ENCODE measurements at regions of chr6 and their contacts with region 1.

Region 1: GRCh38 chr6:72084992-72085569 is 198.7 kb downstream of the RIMS1 start:
- DNase-seq: no peak
- H3K4me3 Mint-ChIP-seq: no peak overlapping the region
- H3K27ac Mint-ChIP-seq: no peak overlapping the region
- H3K4me1 Mint-ChIP-seq: no peaks in the 10 kb centered on the region
- H3K27me3 Mint-ChIP-seq: no peaks in the 10 kb centered on the region

Region 2: DNA sequence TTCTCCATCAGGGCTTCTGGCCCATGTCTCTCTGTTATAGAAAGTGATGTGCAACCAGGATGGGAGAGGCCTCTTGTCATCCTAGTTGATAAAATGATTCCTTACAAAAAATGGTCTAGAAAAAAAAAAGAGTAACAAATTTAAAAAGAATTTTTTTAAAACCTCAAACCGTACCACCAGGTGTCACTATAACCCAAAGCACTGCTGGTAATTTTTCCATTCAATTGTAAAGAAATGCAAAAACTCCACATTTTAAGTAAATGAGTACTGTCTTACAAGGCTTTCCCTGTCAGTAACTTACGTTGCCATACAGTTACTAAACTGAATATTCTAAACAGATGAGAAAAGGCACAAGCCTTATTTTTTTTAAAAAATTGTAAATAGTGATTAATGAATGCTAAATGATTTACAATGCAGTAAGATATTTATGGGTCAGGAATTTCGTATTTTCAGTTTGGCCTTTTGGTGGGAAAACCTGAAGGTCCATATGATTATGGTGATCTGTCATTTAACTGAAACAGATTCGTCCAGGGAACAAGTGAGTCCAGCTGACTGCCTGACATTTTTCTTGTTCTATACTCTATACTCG is 701.1 kb before region 1 on chr6:
- intact Hi-C with region 1: loop called (anchors 2 kb)
- DNase-seq: peak; percentile 57
- H3K4me3 Mint-ChIP-seq: no peak overlapping the region
- H3K27ac Mint-ChIP-seq: no peak overlapping the region
- H3K4me1 Mint-ChIP-seq: no peaks in the 10 kb centered on the region
- H3K27me3 Mint-ChIP-seq: peaks cover 5% of the 10 kb centered on the region

Region 3: GRCh38 chr6:71533939-71534379 is 551.1 kb before region 1 on chr6:
- intact Hi-C with region 1: loop called (anchors 5 kb)
- DNase-seq: no peak
- H3K4me3 Mint-ChIP-seq: no peak overlapping the region
- H3K27ac Mint-ChIP-seq: no peak overlapping the region
- H3K4me1 Mint-ChIP-seq: no peaks in the 10 kb centered on the region
- H3K27me3 Mint-ChIP-seq: no peaks in the 10 kb centered on the region

Region 4: DNA sequence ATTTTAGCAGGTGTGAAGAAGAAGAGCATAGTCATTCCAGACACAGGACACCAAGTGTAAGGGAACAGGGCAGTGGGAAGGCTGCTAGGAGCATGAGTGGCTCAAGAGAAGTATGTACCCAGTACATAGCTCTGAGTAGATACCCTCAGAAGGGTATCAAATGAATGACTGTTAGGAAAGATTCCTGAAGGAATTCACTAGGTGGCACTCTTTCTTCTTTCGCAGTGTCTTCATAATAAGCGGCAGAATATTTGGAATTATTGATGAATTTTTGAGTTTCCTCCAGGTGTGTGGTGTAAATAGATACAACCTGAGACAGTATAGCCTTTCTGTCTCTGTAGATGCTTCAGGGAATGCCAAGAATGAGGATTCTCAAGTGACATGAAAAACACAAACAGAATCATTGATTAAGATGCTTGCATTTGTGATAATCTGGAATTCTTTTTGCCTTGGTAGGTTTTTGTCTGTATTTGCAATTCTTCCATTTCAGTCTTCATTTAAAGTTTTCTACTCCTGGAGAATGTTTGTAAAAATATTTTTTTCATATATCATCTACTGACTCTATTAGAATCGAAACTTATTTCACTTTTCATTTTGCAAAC is 463.1 kb before region 1 on chr6:
- intact Hi-C with region 1: loop called (anchors 10 kb)
- DNase-seq: no peak
- H3K4me3 Mint-ChIP-seq: no peak overlapping the region
- H3K27ac Mint-ChIP-seq: no peak overlapping the region
- H3K4me1 Mint-ChIP-seq: no peaks in the 10 kb centered on the region
- H3K27me3 Mint-ChIP-seq: no peaks in the 10 kb centered on the region

Region 5: DNA sequence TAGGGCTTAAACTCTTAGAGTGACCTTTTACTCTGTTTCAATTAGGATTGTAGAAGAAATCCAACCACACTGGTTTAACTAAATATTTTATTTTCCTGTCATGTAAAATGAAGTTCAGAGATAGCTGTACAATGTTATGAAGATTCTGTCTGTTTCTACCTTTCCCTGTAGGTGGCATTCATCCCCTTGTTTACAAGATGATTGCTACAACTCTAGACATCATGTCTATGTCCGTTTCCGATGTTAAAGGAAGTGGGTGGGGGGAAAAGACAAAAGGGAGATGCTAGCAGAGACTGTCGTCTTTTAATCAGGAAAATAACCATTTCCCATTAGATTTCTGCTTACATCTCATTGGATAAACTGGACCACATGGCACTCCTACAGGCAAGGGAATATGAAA is 229.7 kb before region 1 on chr6:
- intact Hi-C with region 1: no loop called
- DNase-seq: no peak
- H3K4me3 Mint-ChIP-seq: no peak overlapping the region
- H3K27ac Mint-ChIP-seq: no peak overlapping the region
- H3K4me1 Mint-ChIP-seq: no peaks in the 10 kb centered on the region
- H3K27me3 Mint-ChIP-seq: no peaks in the 10 kb centered on the region